ENCODE measurements at regions of chr19 and their contacts with region 1.

Region 1: GRCh38 chr19:44657211-44657921 is 13.7 kb downstream of the PVR start:
- DNase-seq: peak; percentile 59
- H3K4me3 ChIP-seq: no peak overlapping the region
- H3K27ac ChIP-seq: no peak overlapping the region
- H3K4me1 ChIP-seq: peaks cover 12% of the 10 kb centered on the region
- H3K27me3 ChIP-seq: no peaks in the 10 kb centered on the region
- CTCF ChIP-seq: peak; percentile 95

Region 2: DNA sequence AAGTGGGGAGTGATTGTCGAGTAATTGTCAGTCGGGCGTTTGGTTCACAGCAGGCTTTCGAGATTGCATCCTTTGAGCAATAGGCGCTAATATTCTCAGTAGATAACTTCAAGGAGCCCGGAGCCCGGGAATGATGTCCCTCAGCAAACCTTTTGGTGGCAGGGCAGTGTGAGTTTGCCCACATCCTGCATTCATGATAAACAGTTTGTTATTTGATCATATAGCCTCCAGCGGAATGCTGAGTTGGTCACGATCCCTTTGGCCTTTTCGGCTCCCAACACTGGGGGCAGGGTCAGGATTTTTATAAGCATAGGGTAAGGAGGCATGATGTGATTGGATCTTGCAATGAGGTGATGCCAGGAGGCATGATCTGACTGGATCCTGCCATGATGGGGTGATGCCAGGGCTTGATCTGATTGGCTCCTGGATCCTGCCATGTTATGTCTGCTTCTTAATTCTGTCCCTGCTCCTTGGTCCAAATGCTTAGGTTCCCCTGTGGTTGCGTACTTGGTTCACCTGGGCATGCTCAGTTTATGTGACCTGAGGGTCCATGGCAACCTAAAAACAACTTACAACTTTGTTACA is 82.2 kb before region 1 on chr19:
- intact Hi-C with region 1: loop called (anchors 2 kb)
- DNase-seq: no peak
- H3K4me3 ChIP-seq: no peak overlapping the region
- H3K27ac ChIP-seq: no peak overlapping the region
- H3K4me1 ChIP-seq: no peaks in the 10 kb centered on the region
- H3K27me3 ChIP-seq: peaks cover 2% of the 10 kb centered on the region
- CTCF ChIP-seq: no peak

Region 3: DNA sequence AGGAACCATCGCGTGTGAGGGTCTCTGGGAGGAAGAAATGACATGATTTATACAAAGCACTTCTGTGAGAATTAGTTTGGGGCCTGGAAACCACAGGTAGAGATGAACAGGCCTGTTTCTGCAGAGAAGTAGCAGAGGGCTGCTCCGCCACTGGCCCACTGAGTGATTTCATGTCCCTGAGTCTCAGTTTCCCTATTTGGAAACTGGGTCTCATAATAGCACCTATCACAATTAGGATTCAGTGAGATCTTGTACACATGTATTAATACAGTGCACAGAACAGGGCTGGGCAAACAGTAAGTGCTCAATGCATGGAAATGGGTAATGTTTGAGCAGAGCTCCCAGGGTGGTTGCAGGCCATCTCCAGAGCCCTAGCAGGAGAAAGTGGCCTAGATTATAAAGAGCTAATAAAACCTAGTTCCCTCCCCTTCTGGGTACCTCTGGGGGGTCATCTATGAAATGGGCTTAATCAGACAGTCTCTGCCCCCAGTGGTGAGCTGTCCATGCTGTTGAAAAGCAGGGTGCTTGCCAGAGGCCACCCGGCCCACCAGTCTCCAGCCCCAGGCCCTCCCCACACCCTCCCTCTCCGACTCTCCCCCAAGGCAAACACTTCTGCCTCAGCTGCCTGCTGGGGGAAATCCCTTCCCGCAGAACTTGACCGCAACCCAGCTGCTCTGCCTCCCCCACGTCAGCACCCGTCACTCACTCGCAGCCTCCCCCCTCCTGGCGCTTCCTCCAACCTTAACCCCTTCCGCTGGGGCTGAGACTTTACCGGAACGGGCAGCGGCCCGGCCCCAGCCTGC is 95.7 kb after region 1 on chr19:
- intact Hi-C with region 1: no loop called
- DNase-seq: peak; percentile 90
- H3K4me3 ChIP-seq: peak overlapping the region; percentile 73
- H3K27ac ChIP-seq: peak overlapping the region; percentile 98
- H3K4me1 ChIP-seq: peaks cover 94% of the 10 kb centered on the region
- H3K27me3 ChIP-seq: no peaks in the 10 kb centered on the region
- CTCF ChIP-seq: peak; percentile 29

Measured in left ventricle myocardium inferior (tissue), 1 donor.